H1 (cell line): ENCODE measurements at regions of chr1 and their contacts with region 1.

Region 1: DNA sequence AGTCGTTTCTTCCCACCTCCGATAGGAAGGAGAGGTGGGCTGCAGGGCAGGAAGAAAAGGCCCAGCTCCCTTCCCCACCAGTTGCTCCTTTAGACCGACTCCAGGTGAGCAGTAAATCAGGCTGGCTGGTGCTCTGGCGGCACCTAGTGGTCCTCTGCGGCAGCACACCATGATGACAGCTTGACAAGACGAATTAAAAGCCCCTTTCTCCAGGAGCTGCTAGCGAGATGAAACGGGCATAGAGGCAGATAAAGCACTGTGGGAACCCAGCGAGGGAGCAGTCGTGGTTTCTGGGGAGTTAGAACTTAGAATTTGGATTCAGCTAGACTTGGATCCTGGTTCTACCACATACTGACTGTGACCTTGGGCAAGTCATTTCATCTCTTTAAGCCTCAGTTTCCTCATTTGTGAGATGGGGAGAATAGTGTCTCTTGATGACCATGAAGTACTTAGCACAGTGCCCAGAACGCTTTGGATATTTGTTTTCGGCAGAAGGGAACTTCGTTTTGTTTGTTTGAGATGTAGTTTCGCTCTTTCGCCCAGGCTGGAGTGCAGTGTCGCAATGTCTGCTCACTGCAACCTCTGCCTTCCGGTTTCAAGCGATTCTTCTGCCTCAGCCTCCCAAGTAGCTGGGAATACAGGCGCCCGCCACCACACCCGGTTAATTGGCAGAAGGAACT is 21.8 kb upstream of the COL9A2 start:
- DNase-seq: peak; percentile 88 to 98
- H3K4me3 ChIP-seq: no peak overlapping the region
- H3K27ac ChIP-seq: no peak overlapping the region
- H3K4me1 ChIP-seq: no peaks in the 10 kb centered on the region
- H3K27me3 ChIP-seq: no peaks in the 10 kb centered on the region
- CTCF ChIP-seq: peak; percentile 98 to 99 (median 98)
- EP300 ChIP-seq: no peak
- POLR2A ChIP-seq: no peak
- RAD21 ChIP-seq: peak; percentile 100

Region 2: DNA sequence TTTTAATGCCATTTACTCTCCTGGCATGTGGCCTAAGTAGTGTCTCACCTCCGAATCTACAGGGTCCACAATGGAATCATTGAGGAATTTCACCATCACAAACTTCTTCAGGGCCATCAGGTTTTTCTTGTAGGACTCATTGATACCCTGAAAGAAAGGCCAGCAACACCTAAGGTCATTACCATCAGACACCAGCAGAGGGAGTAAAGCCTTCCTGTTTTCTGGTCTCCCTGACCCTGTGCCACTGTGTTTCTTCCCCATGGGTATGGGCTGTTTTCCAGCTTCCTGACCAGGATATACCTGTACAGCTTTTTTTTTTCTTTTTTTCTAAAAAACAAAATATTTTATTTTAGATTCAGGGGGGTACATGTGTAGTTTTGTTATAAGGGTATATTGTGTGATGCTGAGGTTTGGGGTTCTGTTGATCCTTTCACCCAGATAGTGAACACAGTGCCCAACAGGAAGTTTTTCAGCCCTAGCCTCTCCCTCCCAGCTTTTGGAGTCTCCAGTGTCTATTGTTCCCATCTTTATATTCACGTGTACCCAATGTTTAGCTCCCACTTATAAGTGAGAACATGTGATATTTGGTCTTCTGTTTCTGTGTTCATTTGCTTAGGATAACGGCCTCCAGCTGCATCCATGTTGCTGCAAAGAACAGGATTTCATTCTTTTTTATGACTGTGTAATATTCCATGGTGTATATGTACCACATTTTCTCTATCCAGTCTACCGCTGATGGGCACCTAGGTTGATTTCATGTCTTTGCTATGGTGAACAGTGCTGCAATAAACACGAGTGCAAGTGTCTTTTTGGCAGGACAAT is 260.2 kb before region 1 on chr1:
- CTCF ChIA-PET with region 1: interaction called, 28 read pairs
- POLR2A ChIA-PET with region 1: interaction called, 3 read pairs
- DNase-seq: peak in 1 of 2 experiments; percentile 79
- H3K4me3 ChIP-seq: no peak overlapping the region
- H3K27ac ChIP-seq: no peak overlapping the region
- H3K4me1 ChIP-seq: no peaks in the 10 kb centered on the region
- H3K27me3 ChIP-seq: no peaks in the 10 kb centered on the region
- CTCF ChIP-seq: peak; percentile 42 to 80 (median 66)
- EP300 ChIP-seq: no peak
- POLR2A ChIP-seq: no peak
- RAD21 ChIP-seq: peak; percentile 69 to 74

Region 3: GRCh38 chr1:40143891-40144575 is 194.9 kb before region 1 on chr1:
- CTCF ChIA-PET with region 1: interaction called, 108 read pairs
- POLR2A ChIA-PET with region 1: no interaction called
- DNase-seq: peak; percentile 43 to 75
- H3K4me3 ChIP-seq: no peak overlapping the region
- H3K27ac ChIP-seq: no peak overlapping the region
- H3K4me1 ChIP-seq: peaks cover 0 to 2% (median 0%) of the 10 kb centered on the region in 4 experiments; a peak in 1 of 7 replicates
- H3K27me3 ChIP-seq: peaks cover 0 to 2% (median under 1%) of the 10 kb centered on the region in 4 experiments; a peak in 3 of 7 replicates
- CTCF ChIP-seq: peak in 2 of 3 experiments; percentile 80 to 88; a peak in 3 of 4 replicates
- EP300 ChIP-seq: no peak
- POLR2A ChIP-seq: peak in 1 of 2 experiments; percentile 41; a peak in 1 of 3 replicates
- RAD21 ChIP-seq: peak; percentile 88 to 89

Region 4: GRCh38 chr1:40257688-40258444 is 81.0 kb before region 1 on chr1 and contains the start of gene ZMPSTE24:
- CTCF ChIA-PET with region 1: interaction called, 13 read pairs
- POLR2A ChIA-PET with region 1: interaction called, 3 read pairs
- DNase-seq: peak; percentile 88 to 94
- H3K4me3 ChIP-seq: peak within 1 kb of the TSS; percentile 90 to 99 (median 97)
- H3K27ac ChIP-seq: peak within 1 kb of the TSS; percentile 88
- H3K4me1 ChIP-seq: no peaks in the 10 kb centered on the region; a peak in 1 of 7 replicates
- H3K27me3 ChIP-seq: no peaks in the 10 kb centered on the region
- CTCF ChIP-seq: no peak
- EP300 ChIP-seq: no peak; a peak in 1 of 3 replicates
- POLR2A ChIP-seq: peak; percentile 64 to 93
- RAD21 ChIP-seq: peak in 1 of 2 experiments; percentile 0; a peak in 1 of 4 replicates
- total RNA-seq, gene ZMPSTE24: 41.5 and 42.9 TPM in 2 replicates

Region 5: GRCh38 chr1:40315239-40315794 is 23.6 kb before region 1 on chr1:
- CTCF ChIA-PET with region 1: interaction called, 144 read pairs
- POLR2A ChIA-PET with region 1: interaction called, 3 read pairs
- DNase-seq: peak; percentile 76 to 93
- H3K4me3 ChIP-seq: peak overlapping the region; percentile 42 to 63 (median 54)
- H3K27ac ChIP-seq: no peak overlapping the region
- H3K4me1 ChIP-seq: peaks cover 8 to 18% (median 11%) of the 10 kb centered on the region in 4 experiments
- H3K27me3 ChIP-seq: peaks cover 20 to 53% (median 45%) of the 10 kb centered on the region in 4 experiments
- CTCF ChIP-seq: peak in 2 of 3 experiments; percentile 69 to 86; a peak in 3 of 4 replicates
- EP300 ChIP-seq: no peak
- POLR2A ChIP-seq: 0 out of 3 replicates have a peak, but pooled peaks of 1 of the 2 experiments have one; percentile 37
- RAD21 ChIP-seq: peak; percentile 60 to 66

Region 6: GRCh38 chr1:40352126-40352525 is 13.2 kb after region 1 on chr1:
- CTCF ChIA-PET with region 1: interaction called, 16 read pairs
- POLR2A ChIA-PET with region 1: interaction called, 3 read pairs
- DNase-seq: no peak
- H3K4me3 ChIP-seq: no peak overlapping the region
- H3K27ac ChIP-seq: no peak overlapping the region
- H3K4me1 ChIP-seq: no peaks in the 10 kb centered on the region
- H3K27me3 ChIP-seq: no peaks in the 10 kb centered on the region
- CTCF ChIP-seq: no peak
- EP300 ChIP-seq: no peak
- POLR2A ChIP-seq: no peak
- RAD21 ChIP-seq: no peak

Region 7: DNA sequence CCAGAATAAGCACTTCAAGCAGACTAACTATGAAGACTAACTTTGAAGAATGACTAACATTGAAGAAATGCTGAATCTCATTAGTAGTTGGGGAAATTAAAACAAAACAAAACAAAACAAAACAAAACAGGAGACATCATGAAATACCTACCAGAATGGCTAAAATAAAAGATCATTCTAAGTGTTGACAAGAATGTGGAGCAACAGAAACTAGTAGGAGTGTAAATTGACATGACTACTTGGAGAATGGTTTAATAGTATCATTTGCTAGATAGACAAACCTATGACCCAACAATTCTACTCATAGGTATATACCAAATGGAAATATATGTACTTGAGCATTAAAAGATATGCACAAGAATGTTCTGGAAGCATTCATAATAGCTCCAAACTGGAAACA is 92.5 kb after region 1 on chr1:
- CTCF ChIA-PET with region 1: no interaction called
- POLR2A ChIA-PET with region 1: no interaction called
- DNase-seq: no peak
- H3K4me3 ChIP-seq: no peak overlapping the region
- H3K27ac ChIP-seq: no peak overlapping the region
- H3K4me1 ChIP-seq: no peaks in the 10 kb centered on the region
- H3K27me3 ChIP-seq: no peaks in the 10 kb centered on the region
- CTCF ChIP-seq: no peak
- EP300 ChIP-seq: no peak
- POLR2A ChIP-seq: no peak
- RAD21 ChIP-seq: no peak